ENCODE measurements at regions of chr7 and their contacts with region 1.

Region 1: GRCh38 chr7:992709-993607 is 10.0 kb downstream of the CYP2W1 start:
- DNase-seq: peak; percentile 98

Region 2: GRCh38 chr7:1065263-1066260 is 72.6 kb after region 1 on chr7:
- intact Hi-C with region 1: loop called (anchors 1 kb)
- DNase-seq: peak; percentile 89

Region 3: GRCh38 chr7:1175967-1176851 is 183.3 kb after region 1 on chr7:
- intact Hi-C with region 1: loop called (anchors 5 kb)
- DNase-seq: peak; percentile 91

Measured in cardiac septum (tissue), 1 donor.